ENCODE measurements at regions of chr15 and their contacts with region 1.

Region 1: GRCh38 chr15:33132722-33133345 is 61.7 kb downstream of the FMN1 start:
- DNase-seq: peak; percentile 50
- H3K4me3 ChIP-seq: no peak overlapping the region
- H3K27ac ChIP-seq: peak overlapping the region; percentile 76 to 85; a peak in 3 of 4 replicates
- H3K4me1 ChIP-seq: peaks cover 18 to 35% of the 10 kb centered on the region in 2 experiments
- H3K27me3 ChIP-seq: no peaks in the 10 kb centered on the region
- CTCF ChIP-seq: peak; percentile 85
- EP300 ChIP-seq: no peak
- RAD21 ChIP-seq: peak; percentile 92

Region 2: DNA sequence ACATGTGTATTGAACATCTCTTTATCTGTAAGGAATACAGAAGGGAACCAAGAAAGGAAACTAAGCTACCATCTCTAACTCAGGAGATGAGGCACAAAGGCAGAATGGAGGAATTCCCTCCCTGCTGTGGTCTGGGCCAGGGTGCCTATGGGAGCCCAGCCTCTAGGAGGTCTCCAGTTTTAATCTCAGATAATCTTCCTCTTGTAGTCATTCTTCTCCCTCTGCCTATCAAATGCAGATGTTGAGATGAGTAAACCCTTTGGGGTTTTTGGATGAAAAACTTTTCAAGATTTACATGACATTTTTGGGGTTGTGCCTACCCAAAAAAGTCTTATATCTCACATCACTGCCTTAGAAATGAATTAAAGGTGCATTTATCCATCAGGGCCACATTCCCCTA is 468.0 kb before region 1 on chr15:
- CTCF ChIA-PET with region 1: interaction called, 20 read pairs
- POLR2A ChIA-PET with region 1: no interaction called
- DNase-seq: no peak
- H3K4me3 ChIP-seq: no peak overlapping the region
- H3K27ac ChIP-seq: no peak overlapping the region
- H3K4me1 ChIP-seq: peaks cover 4 to 14% of the 10 kb centered on the region in 2 experiments; a peak in 3 of 4 replicates
- H3K27me3 ChIP-seq: no peaks in the 10 kb centered on the region
- CTCF ChIP-seq: no peak
- EP300 ChIP-seq: no peak
- RAD21 ChIP-seq: no peak

Region 3: DNA sequence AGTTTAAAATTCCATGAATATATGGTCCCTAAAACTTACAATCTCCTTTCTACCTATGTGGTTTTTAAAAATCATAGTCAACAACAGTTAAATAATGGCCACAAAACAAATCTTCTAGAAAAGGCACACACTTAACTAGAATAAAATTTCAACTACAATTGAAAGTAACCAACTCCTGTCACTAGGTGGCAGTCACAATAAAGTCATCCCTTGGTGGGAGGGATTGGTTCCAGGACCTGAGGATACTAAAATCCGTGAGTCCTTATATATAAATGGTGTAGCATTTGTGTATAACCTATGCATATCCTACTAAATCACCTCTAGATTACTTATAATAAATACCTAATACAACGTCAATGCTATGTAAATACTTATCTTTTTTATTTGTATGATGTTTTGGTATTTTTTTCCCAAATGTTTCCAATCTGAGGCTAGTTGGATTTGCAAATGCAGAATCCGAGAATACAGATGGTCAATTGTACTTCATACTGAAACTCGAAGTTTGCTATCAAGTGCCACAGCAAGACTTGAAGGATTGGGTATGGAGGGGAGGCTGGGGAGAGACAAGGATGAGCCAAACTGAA is 110.9 kb before region 1 on chr15:
- CTCF ChIA-PET with region 1: interaction called, 47 read pairs
- POLR2A ChIA-PET with region 1: no interaction called
- DNase-seq: peak; percentile 79
- H3K4me3 ChIP-seq: peak overlapping the region in 1 of 2 experiments; percentile 12; a peak in 1 of 4 replicates
- H3K27ac ChIP-seq: peak overlapping the region; percentile 80 to 82
- H3K4me1 ChIP-seq: peaks cover 12 to 16% of the 10 kb centered on the region in 2 experiments
- H3K27me3 ChIP-seq: no peaks in the 10 kb centered on the region
- CTCF ChIP-seq: peak; percentile 75
- EP300 ChIP-seq: no peak
- RAD21 ChIP-seq: peak; percentile 86

Region 4: GRCh38 chr15:33091983-33092693 is 40.7 kb before region 1 on chr15:
- CTCF ChIA-PET with region 1: interaction called, 42 read pairs
- POLR2A ChIA-PET with region 1: no interaction called
- DNase-seq: no peak
- H3K4me3 ChIP-seq: no peak overlapping the region
- H3K27ac ChIP-seq: peak overlapping the region; percentile 45 to 99
- H3K4me1 ChIP-seq: peaks cover 7 to 56% of the 10 kb centered on the region in 2 experiments
- H3K27me3 ChIP-seq: no peaks in the 10 kb centered on the region
- CTCF ChIP-seq: no peak
- EP300 ChIP-seq: no peak
- RAD21 ChIP-seq: no peak

Region 5: DNA sequence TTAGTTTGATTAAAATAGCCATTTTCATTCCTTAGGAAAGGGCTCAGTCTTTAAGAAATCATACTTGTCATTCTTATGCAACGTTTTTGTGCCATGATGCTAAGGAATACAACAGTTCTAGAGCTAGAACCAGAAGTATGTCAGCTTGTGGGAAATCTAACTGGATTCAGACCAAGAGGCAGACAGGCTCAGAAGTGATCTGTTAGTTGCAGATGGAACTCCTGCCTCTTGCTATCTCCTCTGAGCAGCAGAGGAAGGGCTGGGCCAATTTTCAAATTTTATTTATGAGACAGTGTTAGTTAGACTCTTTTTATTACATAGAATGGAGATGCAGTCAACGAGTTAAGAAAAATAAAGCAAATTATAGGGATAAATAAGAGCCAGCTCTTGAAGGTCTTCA is 129.5 kb after region 1 on chr15:
- CTCF ChIA-PET with region 1: no interaction called
- POLR2A ChIA-PET with region 1: no interaction called
- DNase-seq: no peak
- H3K4me3 ChIP-seq: no peak overlapping the region
- H3K27ac ChIP-seq: no peak overlapping the region
- H3K4me1 ChIP-seq: no peaks in the 10 kb centered on the region
- H3K27me3 ChIP-seq: no peaks in the 10 kb centered on the region
- CTCF ChIP-seq: no peak
- EP300 ChIP-seq: no peak
- RAD21 ChIP-seq: no peak

Region 6: DNA sequence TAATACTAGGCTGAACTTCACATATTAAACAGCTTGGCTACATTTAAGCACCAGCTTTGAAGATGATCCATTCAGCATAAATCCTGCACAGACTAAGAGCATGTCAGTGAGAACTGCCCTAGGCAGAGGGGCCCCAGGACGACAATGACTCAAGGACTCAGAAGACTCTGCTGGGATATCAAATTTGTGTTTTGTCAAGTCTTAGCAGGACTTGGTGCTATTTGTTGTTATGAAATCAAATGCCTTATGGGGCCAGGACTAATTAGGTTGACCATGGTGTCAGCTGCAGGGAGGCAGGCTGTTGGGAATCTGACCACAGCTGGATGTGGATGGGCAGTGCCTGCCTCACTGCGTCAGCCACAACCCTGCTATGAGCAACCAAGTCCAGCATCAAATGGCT is 269.8 kb after region 1 on chr15:
- CTCF ChIA-PET with region 1: no interaction called
- POLR2A ChIA-PET with region 1: no interaction called
- DNase-seq: no peak
- H3K4me3 ChIP-seq: no peak overlapping the region
- H3K27ac ChIP-seq: no peak overlapping the region
- H3K4me1 ChIP-seq: no peaks in the 10 kb centered on the region; a peak in 1 of 4 replicates
- H3K27me3 ChIP-seq: peaks cover 4% of the 10 kb centered on the region; the same call in 1 of the 2 replicates
- CTCF ChIP-seq: no peak
- EP300 ChIP-seq: no peak
- RAD21 ChIP-seq: no peak

Region 7: DNA sequence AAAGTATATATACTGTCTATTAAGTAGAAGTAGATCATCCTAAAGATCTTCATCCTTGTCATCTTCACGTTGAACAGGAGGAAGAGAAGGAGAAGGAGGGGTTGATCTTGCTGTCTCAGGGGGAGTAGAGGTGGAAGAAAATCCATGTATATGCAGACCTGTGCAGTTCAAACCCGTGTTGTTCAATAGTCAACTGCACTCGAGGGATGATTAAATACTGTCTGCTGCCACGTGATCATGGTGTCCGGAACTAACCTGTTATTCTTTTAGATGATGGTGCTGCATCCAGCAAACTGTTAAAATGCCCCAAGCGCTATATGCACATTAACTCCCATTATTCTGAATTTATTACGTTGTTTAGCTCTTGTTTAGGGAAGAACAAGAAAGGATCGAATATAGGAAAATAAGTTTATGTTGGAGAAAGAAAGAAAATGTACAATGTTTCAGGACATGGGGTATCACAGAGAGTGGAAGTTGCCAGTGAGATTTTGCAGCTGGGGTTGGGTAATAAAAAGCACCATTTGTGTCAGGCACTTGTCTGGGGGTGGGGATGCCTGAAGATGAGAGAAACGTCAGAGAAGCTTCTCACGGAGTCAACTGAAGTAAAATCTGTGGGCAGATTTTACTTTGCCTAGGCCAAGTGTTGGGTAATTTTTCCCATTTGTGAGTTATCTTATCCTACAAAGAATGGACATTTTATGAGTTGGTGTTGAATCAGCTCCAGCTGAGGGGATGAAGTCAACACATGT is 407.2 kb after region 1 on chr15:
- CTCF ChIA-PET with region 1: no interaction called
- POLR2A ChIA-PET with region 1: no interaction called
- DNase-seq: no peak
- H3K4me3 ChIP-seq: no peak overlapping the region
- H3K27ac ChIP-seq: no peak overlapping the region
- H3K4me1 ChIP-seq: no peaks in the 10 kb centered on the region
- H3K27me3 ChIP-seq: no peaks in the 10 kb centered on the region
- CTCF ChIP-seq: no peak
- EP300 ChIP-seq: no peak
- RAD21 ChIP-seq: no peak

Region 8: GRCh38 chr15:33584797-33585196 is 452.0 kb after region 1 on chr15:
- CTCF ChIA-PET with region 1: no interaction called
- POLR2A ChIA-PET with region 1: no interaction called
- DNase-seq: no peak
- H3K4me3 ChIP-seq: no peak overlapping the region
- H3K27ac ChIP-seq: no peak overlapping the region
- H3K4me1 ChIP-seq: peaks cover 0 to 5% of the 10 kb centered on the region in 2 experiments; a peak in 1 of 4 replicates
- H3K27me3 ChIP-seq: no peaks in the 10 kb centered on the region
- CTCF ChIP-seq: no peak
- EP300 ChIP-seq: peak in 1 of 2 experiments; percentile 53; a peak in 1 of 4 replicates
- RAD21 ChIP-seq: no peak